ENCODE measurements at regions of chr19 and their contacts with region 1.

Region 1: DNA sequence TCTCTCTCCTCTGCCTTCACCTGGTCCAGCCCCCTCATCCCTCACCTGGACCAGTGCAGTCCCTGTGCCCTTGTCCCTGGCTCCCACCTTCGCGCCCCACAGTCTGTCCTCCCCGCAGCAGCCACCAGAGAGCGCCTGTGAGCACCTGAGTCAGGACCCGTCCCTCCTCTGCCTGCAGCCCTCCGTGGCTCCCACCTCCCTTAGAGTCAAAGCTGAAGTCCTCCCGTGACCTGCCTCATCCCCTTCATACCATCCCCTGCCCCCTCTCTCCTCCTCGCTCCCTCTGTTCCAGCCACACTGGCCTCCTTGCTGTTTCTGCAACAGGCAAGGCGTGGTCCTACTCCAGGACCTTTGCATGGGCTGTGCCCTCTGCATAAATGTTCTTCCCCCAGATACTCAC is 10.3 kb downstream of the CELF5 start:
- DNase-seq: no peak
- H3K4me3 ChIP-seq: no peak overlapping the region
- H3K27ac ChIP-seq: no peak overlapping the region
- H3K4me1 ChIP-seq: no peaks in the 10 kb centered on the region
- H3K27me3 ChIP-seq: peaks cover 0 to 2% of the 10 kb centered on the region in 2 experiments
- CTCF ChIP-seq: peak in 1 of 2 donors; percentile 19
- POLR2A ChIP-seq: no peak

Region 2: DNA sequence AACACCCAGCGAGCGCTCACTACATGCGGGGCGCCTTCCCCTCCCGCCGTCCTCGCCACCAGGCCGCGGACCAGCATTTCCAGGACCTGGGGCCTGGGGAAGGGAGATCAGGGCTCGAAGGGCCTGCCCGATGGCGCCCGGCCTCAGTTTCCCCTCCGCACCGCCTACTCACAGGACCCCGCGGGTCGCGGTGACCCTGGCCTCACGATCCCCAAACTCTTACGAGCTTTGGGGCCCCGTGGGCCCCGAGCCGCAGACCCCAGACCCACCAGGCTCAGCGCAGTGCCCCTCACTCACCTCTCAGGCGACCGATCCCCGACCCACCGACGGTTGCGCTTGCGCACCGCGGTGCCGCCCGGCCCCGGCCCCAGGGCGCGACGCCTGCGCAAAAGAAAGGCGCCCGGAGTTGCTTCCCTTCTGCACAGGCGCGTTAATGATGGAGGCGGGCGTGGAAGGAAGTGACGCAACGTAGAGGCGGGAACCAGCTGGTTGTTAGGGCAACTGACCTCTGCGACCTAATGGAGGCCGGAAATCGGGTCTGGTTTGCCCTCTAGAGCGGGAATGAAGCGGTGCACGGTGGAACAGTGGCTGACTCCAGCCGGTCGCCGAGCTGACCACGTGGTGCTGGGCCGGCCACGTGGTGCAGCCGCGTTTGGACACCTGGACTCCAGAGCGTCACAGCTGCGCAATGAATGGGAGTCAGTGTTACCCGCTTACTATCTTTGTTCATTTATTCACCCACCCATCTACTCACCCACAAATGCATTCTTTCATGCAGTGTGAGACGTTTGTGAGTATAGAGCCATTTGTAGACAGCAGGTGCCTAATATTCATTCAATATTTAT is 451.6 kb before region 1 on chr19 and contains the start of gene SGTA:
- CTCF ChIA-PET with region 1: no interaction called
- POLR2A ChIA-PET with region 1: no interaction called
- dilution Hi-C with region 1: no loop called
- intact Hi-C with region 1: no loop called
- DNase-seq: peak; percentile 99
- H3K4me3 ChIP-seq: peak within 1 kb of the TSS; percentile 83 to 89 (median 86)
- H3K27ac ChIP-seq: peak within 1 kb of the TSS; percentile 84
- H3K4me1 ChIP-seq: peaks cover 24% of the 10 kb centered on the region
- H3K27me3 ChIP-seq: no peaks in the 10 kb centered on the region
- CTCF ChIP-seq: peak; percentile 21 to 49
- POLR2A ChIP-seq: peak; percentile 84
- total RNA-seq, gene SGTA: 72.3 and 76.5 TPM in 2 replicates

Region 3: GRCh38 chr19:3210347-3211017 is 24.3 kb before region 1 on chr19:
- CTCF ChIA-PET with region 1: no interaction called
- POLR2A ChIA-PET with region 1: no interaction called
- dilution Hi-C with region 1: no loop called
- intact Hi-C with region 1: no loop called
- DNase-seq: peak; percentile 40
- H3K4me3 ChIP-seq: no peak overlapping the region
- H3K27ac ChIP-seq: no peak overlapping the region
- H3K4me1 ChIP-seq: no peaks in the 10 kb centered on the region
- H3K27me3 ChIP-seq: no peaks in the 10 kb centered on the region
- CTCF ChIP-seq: peak; percentile 74 to 91
- POLR2A ChIP-seq: no peak

Region 4: DNA sequence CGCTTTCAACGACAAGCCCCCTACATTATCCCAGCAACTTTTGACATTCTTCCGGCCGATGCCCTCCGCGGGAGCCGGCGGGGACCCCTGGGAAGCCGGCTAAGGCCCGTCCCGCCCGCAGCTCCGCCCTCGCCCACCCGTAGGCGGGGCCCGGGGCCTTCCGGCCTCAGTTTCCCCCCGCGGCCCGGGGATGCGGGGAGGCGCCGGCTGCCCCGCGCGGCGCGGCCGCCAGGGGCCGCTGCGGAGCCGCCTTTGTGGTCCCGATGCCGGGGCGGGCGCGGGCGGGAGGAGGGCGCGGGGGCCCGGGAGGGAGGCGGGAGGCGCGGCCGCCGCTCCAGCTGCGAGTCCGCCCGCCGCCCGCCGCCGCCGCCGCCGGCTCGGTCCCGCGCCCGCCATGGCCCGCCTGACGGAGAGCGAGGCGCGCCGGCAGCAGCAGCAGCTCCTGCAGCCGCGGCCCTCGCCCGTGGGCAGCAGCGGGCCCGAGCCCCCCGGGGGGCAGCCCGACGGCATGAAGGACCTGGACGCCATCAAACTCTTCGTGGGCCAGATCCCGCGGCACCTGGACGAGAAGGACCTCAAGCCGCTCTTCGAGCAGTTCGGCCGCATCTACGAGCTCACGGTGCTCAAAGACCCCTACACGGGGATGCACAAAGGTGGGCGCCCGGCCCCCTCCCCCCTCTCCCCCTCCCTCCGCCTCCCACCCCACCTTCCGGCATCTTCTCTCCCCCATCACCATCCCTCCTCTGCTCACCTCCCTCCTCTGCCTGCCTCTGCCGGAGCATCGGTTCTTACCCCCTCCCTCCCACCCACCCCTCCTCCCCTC is 10.2 kb before region 1 on chr19 and contains the start of gene CELF5:
- CTCF ChIA-PET with region 1: interaction called, 10 read pairs
- POLR2A ChIA-PET with region 1: no interaction called
- dilution Hi-C with region 1: no loop called
- intact Hi-C with region 1: no loop called
- DNase-seq: no peak
- H3K4me3 ChIP-seq: no peak within 1 kb of the TSS
- H3K27ac ChIP-seq: no peak within 1 kb of the TSS
- H3K4me1 ChIP-seq: no peaks in the 10 kb centered on the region
- H3K27me3 ChIP-seq: peaks cover 19 to 21% of the 10 kb centered on the region in 2 experiments
- CTCF ChIP-seq: peak; percentile 27 to 50
- POLR2A ChIP-seq: no peak
- total RNA-seq, gene CELF5: not detected in 2 replicates

Measured in endothelial cell of umbilical vein (primary cell).